ENCODE measurements at regions of chr4 and their contacts with region 1.

Region 1: GRCh38 chr4:118888666-118889311 is at the start of gene SYNPO2:
- DNase-seq: peak; percentile 88
- ATAC-seq: peak; percentile 90 to 98
- total RNA-seq, gene SYNPO2: 67.6 to 94.4 TPM

Region 2: DNA sequence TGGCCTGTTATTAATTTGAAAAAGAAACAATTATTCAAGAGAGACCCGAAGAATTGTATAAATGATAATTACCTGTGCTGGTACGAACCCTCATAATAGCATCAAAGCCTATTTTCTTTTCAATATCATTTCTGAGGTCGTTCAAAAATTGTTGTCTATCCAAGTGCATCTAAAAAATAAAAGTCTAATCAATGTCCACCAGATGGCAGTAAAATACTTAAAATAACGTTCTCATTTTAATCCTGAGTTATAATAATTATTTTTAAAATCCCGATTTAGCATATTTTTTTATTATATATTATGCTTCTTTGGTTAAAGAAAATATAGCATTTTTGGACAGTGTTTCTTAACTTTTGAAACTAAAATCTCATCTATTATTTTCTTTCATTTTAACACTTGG is 147.9 kb before region 1 on chr4:
- intact Hi-C with region 1: loop called in 1 of 2 experiments (anchors 2 kb)
- DNase-seq: no peak
- ATAC-seq: no peak

Region 3: GRCh38 chr4:118772081-118772766 is 116.6 kb before region 1 on chr4:
- intact Hi-C with region 1: loop called (anchors 5 to 10 kb)
- DNase-seq: no peak
- ATAC-seq: peak; percentile 80 to 82